GM23248 (cell line): ENCODE measurements at regions of chr17 and their contacts with region 1.

Region 1: DNA sequence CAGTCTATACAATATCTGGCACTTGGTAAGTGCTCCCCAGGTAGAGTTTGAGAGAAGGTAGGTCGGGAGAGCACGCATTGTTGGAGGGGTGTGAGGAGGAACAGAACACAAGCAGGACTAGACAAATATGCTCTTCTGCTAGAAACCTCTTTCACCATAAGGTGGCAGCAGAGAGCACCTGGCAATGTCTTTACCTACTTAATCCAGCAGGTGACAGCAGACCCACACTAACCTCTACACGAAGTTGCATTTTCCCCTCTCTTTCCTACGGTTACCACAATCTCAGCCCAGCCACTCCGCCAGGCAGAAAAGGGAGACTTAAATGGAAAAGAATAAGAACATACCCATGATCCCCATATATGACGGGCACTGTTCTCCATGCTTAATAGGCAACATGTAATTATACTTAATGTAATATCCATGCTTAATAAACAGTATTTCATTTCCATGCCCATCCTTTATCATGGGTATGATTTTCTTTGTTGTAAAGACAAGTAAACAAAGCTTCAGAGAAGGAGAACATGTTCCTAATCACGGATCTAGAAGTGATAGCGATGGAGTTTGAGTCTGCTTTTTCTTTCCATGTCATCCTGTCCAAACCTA is 55.1 kb upstream of the CCL2 start:
- DNase-seq: peak; percentile 85
- H3K4me3 ChIP-seq: no peak overlapping the region
- H3K27ac ChIP-seq: no peak overlapping the region
- H3K4me1 ChIP-seq: no peaks in the 10 kb centered on the region
- H3K27me3 ChIP-seq: peaks cover 12% of the 10 kb centered on the region

Region 2: GRCh38 chr17:34306466-34306865 is 106.4 kb after region 1 on chr17:
- in situ Hi-C with region 1: loop called (anchors 10 kb)
- DNase-seq: peak; percentile 82
- H3K4me3 ChIP-seq: no peak overlapping the region
- H3K27ac ChIP-seq: peak overlapping the region; percentile 38; the same call in 1 of the 2 replicates
- H3K4me1 ChIP-seq: peaks cover 16% of the 10 kb centered on the region
- H3K27me3 ChIP-seq: no peaks in the 10 kb centered on the region

Region 3: DNA sequence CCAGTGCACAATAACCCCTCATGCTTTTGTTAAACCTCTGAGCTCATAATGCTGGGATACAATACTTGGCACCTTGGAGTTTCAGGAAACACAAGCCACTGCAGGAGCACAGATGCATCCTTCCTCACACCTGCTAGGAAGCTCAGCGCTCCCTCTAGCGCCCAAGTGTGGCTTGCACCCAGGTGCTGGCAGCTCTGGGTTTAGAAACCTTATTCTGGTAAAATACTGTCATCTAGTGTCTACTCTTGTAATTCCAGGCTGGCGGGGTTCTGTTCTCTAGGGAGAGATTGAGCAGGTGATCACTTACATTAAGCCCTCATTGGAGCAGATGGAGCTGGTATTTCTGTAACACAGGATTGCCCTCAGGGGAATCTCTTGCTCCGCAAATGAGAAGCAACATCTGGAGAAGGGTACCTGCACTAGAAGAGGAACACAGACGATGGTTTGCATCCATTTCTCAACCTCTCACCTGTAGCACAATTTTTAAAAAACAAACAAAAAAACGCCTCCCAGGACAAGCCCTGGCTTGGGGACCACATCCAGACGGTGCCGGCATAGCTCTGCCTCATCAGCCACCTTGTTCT is 161.5 kb after region 1 on chr17:
- in situ Hi-C with region 1: loop called (anchors 10 kb)
- DNase-seq: peak; percentile 90
- H3K4me3 ChIP-seq: no peak overlapping the region
- H3K27ac ChIP-seq: no peak overlapping the region
- H3K4me1 ChIP-seq: no peaks in the 10 kb centered on the region
- H3K27me3 ChIP-seq: peaks cover 29% of the 10 kb centered on the region